WTC11 (cell line): ENCODE measurements at regions of chr20 and their contacts with region 1.

Region 1: GRCh38 chr20:34876162-34877001 is at the start of gene ACSS2:
- DNase-seq: peak; percentile 100
- ATAC-seq: peak; percentile 90
- H3K4me3 Mint-ChIP-seq: peak within 1 kb of the TSS; percentile 98
- H3K27ac Mint-ChIP-seq: peak within 1 kb of the TSS; percentile 98
- H3K4me1 Mint-ChIP-seq: peaks cover 48% of the 10 kb centered on the region
- H3K27me3 Mint-ChIP-seq: peaks cover 34% of the 10 kb centered on the region
- CTCF ChIP-seq: no peak
- total RNA-seq, gene ACSS2: 28.9 to 35.9 TPM (median 29.0 TPM) in 3 replicates

Region 2: DNA sequence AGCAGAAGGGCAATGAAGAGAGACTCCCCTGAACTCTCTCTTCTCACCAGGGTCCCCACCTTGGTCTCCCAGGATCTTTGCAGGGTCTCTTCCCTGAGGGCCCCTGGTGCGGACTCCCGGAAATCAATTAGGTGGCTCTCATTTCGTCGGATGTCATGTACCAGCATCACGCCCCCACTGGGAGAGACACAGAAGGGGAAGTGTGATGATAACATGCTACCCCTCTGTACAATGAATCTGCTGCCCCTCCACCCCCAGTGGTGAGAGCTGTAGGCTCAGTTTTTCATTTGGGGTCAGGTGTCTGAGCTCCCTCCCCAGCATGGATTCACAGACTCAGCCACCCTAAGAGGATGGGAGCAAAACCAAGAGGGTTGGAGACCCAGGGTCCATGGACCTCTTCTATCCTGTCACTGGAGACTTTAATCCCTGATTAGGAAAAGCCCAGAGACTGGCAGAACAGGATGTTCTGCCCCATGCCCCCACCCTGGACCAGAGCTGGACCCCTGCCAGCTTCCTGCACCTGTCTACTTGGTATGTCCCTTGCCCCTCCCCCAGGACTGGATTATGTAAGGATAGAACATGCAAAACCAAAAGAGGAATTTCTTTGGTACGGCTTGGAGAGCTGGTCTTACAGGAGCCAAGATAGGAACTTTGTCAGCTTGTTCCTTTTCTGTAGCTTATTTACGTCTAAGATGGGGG is 14.8 kb before region 1 on chr20:
- CTCF ChIA-PET with region 1: interaction called, 24 read pairs
- POLR2A ChIA-PET with region 1: no interaction called
- DNase-seq: no peak
- ATAC-seq: no peak
- H3K4me3 Mint-ChIP-seq: no peak overlapping the region
- H3K27ac Mint-ChIP-seq: no peak overlapping the region; the same call in 1 of the 2 replicates
- H3K4me1 Mint-ChIP-seq: peaks cover 18% of the 10 kb centered on the region
- H3K27me3 Mint-ChIP-seq: peaks cover 4% of the 10 kb centered on the region; the same call in 1 of the 2 replicates
- CTCF ChIP-seq: no peak

Region 3: DNA sequence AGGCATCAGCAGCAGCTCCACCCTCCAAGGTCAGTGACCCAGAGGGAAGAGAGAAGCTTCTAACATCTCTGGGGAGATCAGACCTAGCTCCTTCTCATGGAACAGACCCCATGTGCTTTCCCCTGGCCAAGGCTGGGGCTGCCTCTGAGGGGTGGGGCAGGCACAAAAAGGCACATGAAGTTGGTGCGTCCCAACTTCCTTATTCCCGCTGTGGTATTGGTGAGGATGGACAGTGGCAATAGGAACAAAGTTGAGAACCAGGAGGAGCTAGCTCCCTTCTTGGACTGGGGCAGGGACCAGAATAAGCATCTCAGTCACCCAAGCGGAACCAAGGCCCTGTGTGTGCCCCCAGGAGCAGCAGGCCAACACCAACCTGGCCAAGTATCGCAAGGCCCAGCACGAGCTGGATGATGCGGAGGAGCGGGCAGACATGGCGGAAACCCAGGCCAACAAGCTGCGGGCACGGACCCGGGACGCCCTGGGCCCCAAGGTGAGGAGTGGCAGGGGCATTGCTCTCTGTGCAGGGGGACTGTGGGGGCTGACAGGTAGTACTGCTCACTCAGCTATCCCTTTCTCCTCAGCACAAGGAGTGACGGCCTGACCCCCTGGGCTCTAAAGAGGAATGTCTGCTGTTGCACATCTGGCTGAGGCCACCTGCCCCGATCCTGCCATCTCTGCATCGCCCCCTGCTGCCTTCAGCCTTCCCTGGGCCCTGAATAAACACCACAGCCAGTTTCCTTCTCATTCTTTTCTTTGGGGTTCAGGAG is 125.4 kb after region 1 on chr20:
- CTCF ChIA-PET with region 1: interaction called, 152 read pairs
- POLR2A ChIA-PET with region 1: interaction called, 5 read pairs
- DNase-seq: peak; percentile 66
- ATAC-seq: no peak; the same call in 1 of the 2 replicates
- H3K4me3 Mint-ChIP-seq: no peak overlapping the region
- H3K27ac Mint-ChIP-seq: no peak overlapping the region
- H3K4me1 Mint-ChIP-seq: peaks cover 6% of the 10 kb centered on the region
- H3K27me3 Mint-ChIP-seq: no peaks in the 10 kb centered on the region
- CTCF ChIP-seq: no peak